Activated T-helper 1 cell treated with anti-CD3 and anti-CD28 coated beads, Interleukin-12 subunit alpha, Interleukin-12 subunit beta, Interleukin-2, Interleukin-4 antibody, amounts not matched to agents 30 ng/mL and 10 ng/mL and 1 ng/mL, durations not matched to agents 14 hours and 24 hours and 36 hours (primary cell): ENCODE measurements at regions of chr20 and their contacts with region 1.

Region 1: GRCh38 chr20:40990542-40991120 is 38.0 kb upstream of the TOP1 start:
- DNase-seq: peak; percentile 57
- H3K4me3 Mint-ChIP-seq: no peak overlapping the region
- H3K27ac Mint-ChIP-seq: peak overlapping the region; percentile 71
- H3K4me1 Mint-ChIP-seq: peaks cover 44% of the 10 kb centered on the region
- H3K27me3 Mint-ChIP-seq: no peaks in the 10 kb centered on the region

Region 2: DNA sequence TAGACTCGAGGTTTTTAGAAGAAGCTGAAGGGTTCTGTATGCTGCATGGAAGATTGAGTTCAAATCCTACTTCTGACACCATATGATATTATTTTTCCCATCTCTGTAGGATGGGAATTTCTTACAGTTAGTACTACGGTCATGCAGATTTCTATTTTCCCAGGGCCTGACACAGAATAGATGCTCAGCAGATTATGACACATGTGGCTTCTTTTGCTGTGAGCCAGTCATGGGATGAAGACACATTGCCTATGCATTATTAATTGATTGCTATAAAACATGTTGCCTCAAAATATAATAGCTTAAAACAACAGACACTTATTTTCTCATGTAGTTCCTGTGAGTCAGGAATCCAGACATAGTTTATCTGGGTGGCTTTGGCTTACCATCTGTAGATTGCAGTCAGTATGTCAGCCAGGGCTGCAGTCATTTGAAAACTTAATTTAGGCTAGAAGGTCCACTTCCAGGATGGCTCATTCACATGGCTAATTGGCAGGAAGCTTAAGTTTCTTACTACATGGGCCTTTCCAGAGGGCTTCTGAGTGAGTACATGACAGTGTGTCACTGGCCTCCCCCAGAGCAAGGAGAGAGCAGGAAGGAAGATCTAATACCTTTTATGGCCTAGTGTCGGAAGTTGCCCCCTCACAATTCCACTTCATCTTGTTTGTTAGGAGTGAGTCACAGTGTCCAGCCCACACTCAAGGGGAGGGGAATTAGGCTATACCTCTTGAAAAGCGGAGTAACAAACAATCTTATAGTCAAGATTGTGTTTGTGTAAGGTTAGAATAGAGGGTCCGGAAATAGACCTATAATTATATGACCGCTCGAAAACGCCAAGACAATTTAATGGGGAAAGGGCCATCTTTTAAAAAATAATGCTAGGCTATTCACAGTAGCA is 67.6 kb after region 1 on chr20:
- intact Hi-C with region 1: loop called (anchors 2 kb)
- DNase-seq: no peak
- H3K4me3 Mint-ChIP-seq: no peak overlapping the region
- H3K27ac Mint-ChIP-seq: peak overlapping the region; percentile 76
- H3K4me1 Mint-ChIP-seq: peaks cover 54% of the 10 kb centered on the region
- H3K27me3 Mint-ChIP-seq: no peaks in the 10 kb centered on the region

Region 3: GRCh38 chr20:41095110-41095969 is 104.7 kb after region 1 on chr20:
- intact Hi-C with region 1: loop called (anchors 1 kb)
- DNase-seq: peak; percentile 34
- H3K4me3 Mint-ChIP-seq: no peak overlapping the region
- H3K27ac Mint-ChIP-seq: no peak overlapping the region
- H3K4me1 Mint-ChIP-seq: peaks cover 13% of the 10 kb centered on the region
- H3K27me3 Mint-ChIP-seq: no peaks in the 10 kb centered on the region

Region 4: GRCh38 chr20:42472198-42472597 is 1481.6 kb after region 1 on chr20:
- intact Hi-C with region 1: no loop called
- DNase-seq: no peak
- H3K4me3 Mint-ChIP-seq: no peak overlapping the region
- H3K27ac Mint-ChIP-seq: no peak overlapping the region
- H3K4me1 Mint-ChIP-seq: no peaks in the 10 kb centered on the region
- H3K27me3 Mint-ChIP-seq: no peaks in the 10 kb centered on the region